ENCODE measurements at regions of chr19 and their contacts with region 1.

Region 1: DNA sequence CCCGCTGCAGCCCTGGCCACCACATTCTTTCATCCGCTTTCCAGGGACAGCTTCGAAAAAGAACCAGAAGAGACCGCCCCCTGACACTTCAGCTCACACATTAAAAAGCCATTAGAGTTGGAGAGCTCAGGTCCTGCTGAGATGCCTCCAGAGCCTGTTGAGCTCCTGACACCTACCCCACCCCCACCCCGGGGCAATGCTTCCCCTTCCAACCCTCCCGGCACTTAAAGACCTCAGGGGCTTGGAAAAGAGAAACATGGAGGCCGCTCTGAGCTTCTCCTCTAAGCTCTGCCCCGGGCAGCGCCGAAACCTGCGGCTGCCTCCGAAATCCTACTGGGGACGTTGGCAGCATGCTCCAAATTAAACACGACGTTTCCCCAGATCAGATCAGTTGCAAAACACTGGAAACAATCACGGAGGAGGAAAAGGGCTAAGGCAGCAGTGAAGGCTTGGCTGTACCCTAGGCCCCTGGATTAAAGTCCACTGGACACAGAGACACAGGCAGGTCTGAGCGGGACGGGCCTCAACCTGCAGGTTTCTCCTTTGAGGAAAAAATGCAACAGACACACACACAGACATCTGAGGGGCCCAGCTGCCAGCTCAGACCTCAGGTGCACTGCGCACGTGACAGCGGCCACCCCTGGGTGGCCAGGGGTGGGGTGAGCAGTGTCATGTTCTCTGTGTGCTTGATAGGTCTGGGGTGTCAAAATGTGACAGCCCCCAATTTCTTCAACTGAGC is 9.6 kb downstream of the SH3GL1 start:
- DNase-seq: no peak
- H3K4me3 ChIP-seq: peak overlapping the region in 3 of 4 donors; percentile 7 to 25 (median 21)
- H3K27ac ChIP-seq: peak overlapping the region; percentile 73 to 84 (median 80)
- H3K4me1 ChIP-seq: peaks cover 0 to 75% (median 69%) of the 10 kb centered on the region in 4 donors
- H3K27me3 ChIP-seq: no peaks in the 10 kb centered on the region
- CTCF ChIP-seq: no peak
- EP300 ChIP-seq: no peak
- POLR2A ChIP-seq: no peak

Region 2: DNA sequence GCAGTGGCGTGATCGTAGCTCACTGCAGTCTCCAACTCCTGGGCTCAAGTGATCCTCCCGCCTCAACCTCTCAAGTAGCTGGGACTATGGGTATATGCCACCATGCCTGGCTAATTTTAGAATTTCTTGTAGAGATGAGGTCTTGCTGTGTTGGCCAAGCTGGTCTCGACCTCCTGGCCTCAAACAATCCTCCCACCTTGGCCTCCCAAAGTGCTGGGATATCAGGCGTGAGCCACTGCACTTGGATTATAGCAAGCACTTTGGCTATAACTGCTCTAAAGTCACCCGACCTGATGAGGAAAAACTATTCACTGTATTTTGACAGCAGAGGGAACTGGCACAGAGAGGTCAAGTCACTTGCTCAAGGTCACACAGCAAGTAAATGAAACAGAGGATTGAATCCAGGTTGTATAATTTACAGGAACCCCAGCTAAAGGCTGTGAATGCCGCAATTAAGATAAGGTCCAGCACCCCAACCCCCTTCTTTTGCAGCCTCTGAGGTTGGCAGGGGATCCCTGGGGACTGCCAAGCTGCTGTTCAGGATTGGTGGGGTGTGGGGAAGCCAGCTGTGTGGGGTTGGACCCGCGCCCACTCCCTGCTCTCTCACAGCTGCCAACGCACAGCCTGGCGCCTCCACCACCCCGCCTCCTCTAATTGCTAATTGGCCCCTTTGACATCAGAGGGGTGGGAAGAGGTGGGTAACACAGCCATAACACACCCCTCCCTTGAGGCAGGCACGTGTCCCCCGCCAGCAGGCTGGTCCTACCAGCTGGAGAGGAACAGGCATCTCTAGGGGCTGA is 94.6 kb before region 1 on chr19:
- intact Hi-C with region 1: no loop called
- DNase-seq: no peak
- H3K4me3 ChIP-seq: no peak overlapping the region
- H3K27ac ChIP-seq: no peak overlapping the region
- H3K4me1 ChIP-seq: no peaks in the 10 kb centered on the region
- H3K27me3 ChIP-seq: peaks cover 0 to 20% (median 7%) of the 10 kb centered on the region in 3 donors
- CTCF ChIP-seq: no peak
- EP300 ChIP-seq: no peak
- POLR2A ChIP-seq: no peak

Region 3: DNA sequence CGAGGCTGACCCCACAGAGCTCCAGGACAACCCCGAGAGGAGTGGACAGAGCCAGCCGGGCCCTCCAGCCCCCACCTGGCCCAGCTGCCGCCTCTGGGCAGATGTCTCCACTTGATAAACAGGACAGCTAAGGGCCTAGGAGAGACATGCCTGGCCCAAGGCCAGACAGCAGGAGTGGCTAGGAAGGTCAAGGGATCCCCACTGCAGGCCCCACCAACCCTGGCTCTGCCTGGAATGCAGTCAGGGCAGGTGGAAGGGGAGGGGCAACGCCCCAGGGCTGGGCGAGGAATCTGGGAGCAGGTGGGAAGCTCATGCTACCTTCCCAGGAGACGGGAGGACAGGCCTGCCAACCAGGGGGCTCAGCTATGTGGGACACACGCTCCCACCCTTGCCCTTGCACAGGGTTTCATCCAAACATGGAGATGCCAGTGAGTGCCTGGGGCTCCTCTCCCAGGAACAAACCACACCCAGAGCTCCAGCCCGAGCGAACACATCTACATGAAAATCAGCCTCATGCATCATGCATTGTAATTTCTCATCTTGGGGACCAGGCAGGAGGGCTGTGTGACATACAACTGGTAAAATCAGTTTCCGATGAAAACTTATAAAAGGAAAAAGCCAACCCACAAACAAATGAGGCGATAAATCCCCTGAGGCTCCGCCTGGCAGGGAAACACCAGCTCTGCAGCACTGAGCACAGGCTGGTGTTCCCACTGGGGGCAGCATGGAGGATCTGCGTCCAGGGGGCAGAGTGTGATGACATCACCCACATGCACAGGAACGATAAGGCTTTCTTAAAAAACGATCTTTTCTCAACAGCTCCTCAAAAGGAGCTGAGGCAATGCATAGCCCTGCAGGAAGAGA is 15.3 kb before region 1 on chr19:
- intact Hi-C with region 1: loop called (anchors 2 kb)
- DNase-seq: peak; percentile 78
- H3K4me3 ChIP-seq: no peak overlapping the region
- H3K27ac ChIP-seq: peak overlapping the region; percentile 77 to 83 (median 82)
- H3K4me1 ChIP-seq: peaks cover 0 to 85% (median 78%) of the 10 kb centered on the region in 4 donors
- H3K27me3 ChIP-seq: no peaks in the 10 kb centered on the region
- CTCF ChIP-seq: peak in 2 of 4 experiments; percentile 15 to 24
- EP300 ChIP-seq: no peak
- POLR2A ChIP-seq: no peak

Measured in sigmoid colon (tissue), 7 donors.